ENCODE measurements at regions of chr7 and their contacts with region 1.

Region 1: DNA sequence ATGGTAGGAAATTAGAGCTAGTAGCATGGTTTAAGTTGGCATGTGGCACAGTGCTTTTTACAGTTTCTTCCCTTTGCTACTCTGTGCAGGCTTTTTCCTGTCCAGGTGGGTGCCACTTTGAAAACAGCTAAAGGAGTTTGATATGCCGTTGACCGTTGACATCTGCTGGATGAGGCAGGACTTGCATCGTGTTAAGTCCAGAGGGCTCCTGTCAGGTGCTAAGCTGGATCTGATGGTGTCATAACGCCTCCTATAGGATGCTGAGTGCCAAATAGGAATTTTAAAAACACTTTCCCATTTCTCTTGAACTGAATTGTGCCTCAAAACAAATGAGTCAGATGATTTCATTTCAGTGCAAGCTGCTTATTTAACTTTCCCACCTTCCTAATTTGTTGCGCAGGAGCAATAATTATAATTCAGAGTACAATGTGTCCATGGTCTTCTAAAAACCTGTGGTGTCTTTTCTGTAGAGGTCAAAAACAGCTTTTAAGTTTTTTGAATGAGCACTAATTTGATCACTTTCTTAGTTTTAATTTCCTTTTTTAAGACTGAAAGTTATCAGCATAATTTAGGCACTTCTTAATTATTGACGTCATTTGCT is 178.3 kb downstream of the CDCA7L start:
- H3K4me3 ChIP-seq: no peak overlapping the region
- H3K27ac ChIP-seq: no peak overlapping the region
- H3K4me1 ChIP-seq: no peaks in the 10 kb centered on the region
- CTCF ChIP-seq: peak; percentile 66

Region 2: DNA sequence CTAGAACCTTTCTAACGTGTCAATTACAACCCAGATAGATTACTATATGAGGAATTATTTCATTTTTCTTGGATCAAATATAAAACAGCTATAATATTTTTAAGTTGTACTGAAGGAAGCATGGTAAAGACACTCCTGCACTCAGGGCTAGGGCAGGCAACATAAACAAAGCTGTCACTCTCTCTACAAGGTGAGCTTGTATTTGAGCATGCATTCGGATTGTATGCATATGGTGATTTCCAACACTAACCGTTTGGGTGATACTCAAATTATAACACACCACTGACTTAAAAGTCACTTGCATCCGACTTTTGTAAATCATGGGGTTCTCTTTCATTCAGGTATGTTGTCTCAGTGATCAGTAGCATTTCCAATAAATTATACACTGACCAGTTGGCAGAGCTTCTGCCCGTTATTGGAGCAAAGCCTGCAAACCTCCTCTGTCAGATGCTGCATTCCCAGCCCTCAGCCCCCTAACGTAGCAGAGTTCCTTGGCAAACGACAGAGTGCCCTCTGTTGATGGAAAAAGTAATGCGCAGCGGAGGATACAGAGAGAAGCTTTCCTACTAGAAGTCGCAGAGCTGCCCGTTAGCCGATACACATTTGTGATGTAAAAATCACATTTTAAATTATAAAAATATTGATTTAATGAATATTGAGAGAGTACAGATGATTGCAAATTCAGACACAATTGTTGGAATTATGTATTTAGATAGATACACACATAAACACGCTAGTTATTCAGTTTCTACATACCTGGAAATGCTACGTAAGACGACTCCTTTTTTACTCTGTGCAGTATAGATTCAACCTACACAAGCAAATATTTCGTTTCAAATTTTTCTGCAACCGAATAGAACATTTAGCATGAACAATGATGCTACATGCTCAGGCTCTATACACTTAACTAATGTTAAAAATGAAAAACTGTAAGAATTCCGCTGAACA is 513.4 kb before region 1 on chr7:
- CTCF ChIA-PET with region 1: interaction called, 110 read pairs
- POLR2A ChIA-PET with region 1: no interaction called
- H3K4me3 ChIP-seq: no peak overlapping the region
- H3K27ac ChIP-seq: no peak overlapping the region
- H3K4me1 ChIP-seq: 0 out of 2 replicates have a peak, but pooled peaks cover 2% of the 10 kb centered on the region
- CTCF ChIP-seq: peak; percentile 47; the same call in 1 of the 2 replicates

Region 3: DNA sequence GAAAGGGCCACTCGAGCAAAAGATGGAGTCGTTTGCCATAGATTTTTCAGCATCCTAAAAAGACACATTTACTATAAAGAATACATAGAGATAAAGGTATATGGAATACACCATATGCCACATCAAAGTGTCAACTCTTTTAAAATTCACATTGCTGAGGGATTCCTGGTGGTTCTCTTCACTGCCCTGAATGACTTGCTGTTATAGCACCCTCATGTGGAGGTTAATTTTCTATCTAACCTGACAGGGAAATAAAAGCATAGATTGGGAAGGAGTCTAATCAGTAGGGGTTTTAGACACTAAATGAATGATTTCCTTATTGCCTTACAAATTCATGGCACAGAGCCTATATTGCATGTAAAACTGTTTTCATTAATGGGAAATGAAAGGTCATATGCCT is 198.6 kb before region 1 on chr7:
- CTCF ChIA-PET with region 1: interaction called, 15 read pairs
- POLR2A ChIA-PET with region 1: no interaction called
- H3K4me3 ChIP-seq: no peak overlapping the region
- H3K27ac ChIP-seq: no peak overlapping the region
- H3K4me1 ChIP-seq: no peaks in the 10 kb centered on the region
- CTCF ChIP-seq: no peak

Region 4: GRCh38 chr7:21640105-21640504 is 127.3 kb before region 1 on chr7:
- CTCF ChIA-PET with region 1: no interaction called
- POLR2A ChIA-PET with region 1: no interaction called
- H3K4me3 ChIP-seq: no peak overlapping the region
- H3K27ac ChIP-seq: no peak overlapping the region
- H3K4me1 ChIP-seq: no peaks in the 10 kb centered on the region
- CTCF ChIP-seq: no peak

Region 5: DNA sequence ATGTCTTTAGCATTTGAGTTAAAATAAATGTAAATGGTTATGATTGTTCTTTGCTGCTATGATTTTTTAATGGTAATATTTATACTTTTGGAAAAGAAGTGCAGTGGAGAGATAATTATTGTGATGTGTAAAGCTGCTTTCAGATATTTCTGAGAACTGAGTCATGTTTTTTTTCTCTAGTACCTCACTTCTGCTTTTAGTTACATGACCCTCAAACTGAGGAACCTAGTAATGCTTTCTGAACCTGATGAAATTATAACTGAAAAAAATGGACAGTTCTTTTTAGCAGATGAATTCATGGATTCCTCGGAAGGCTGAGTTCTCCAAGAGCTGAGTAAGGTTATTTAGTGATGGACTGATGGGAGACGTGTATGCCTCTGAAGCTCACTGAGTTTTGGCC is 10.5 kb after region 1 on chr7:
- CTCF ChIA-PET with region 1: interaction called, 47 read pairs
- POLR2A ChIA-PET with region 1: no interaction called
- H3K4me3 ChIP-seq: no peak overlapping the region
- H3K27ac ChIP-seq: no peak overlapping the region
- H3K4me1 ChIP-seq: no peaks in the 10 kb centered on the region
- CTCF ChIP-seq: no peak

Region 6: DNA sequence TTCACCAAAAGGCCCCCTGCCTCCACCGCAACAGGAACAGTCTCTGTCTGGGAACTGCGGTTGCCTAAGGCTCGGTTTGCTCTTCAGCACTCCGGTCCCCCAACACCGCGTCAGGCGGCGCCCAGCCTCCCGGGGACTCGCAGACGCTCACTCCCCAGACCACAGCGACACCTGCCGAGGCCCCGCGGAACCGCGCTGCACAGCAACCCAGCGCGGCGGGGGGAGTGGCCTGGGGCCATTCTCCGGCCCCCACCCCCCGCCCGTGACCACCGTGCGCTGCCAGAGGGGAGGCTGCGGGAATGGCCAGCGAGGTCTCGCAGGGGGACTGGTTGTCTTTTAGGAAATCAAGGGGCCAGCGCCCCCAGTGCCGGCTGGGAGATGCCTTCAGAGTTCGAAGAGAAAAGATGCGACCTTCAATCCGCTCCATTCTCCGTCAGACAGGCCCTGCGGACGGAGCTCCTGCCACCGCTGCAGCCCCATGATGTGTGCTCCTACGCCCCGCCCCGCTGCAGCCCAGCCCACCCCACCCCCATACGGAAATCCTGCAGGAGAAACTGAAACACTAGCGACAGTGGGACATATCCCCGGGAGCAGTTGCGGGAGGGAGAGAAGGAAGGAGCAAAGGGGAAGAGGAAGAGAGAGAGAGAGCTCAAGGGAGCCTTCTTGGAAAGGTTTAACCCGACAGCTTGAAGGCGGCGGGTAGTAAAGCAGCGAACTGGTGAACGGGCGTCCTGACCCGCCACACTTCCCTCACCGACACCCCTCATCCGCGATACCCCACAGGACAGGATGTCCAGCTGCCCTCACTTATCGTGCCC is 315.7 kb after region 1 on chr7:
- CTCF ChIA-PET with region 1: interaction called, 11 read pairs
- POLR2A ChIA-PET with region 1: no interaction called
- H3K4me3 ChIP-seq: peak overlapping the region; percentile 63
- H3K27ac ChIP-seq: peak overlapping the region; percentile 47; the same call in 1 of the 2 replicates
- H3K4me1 ChIP-seq: 0 out of 2 replicates have a peak, but pooled peaks cover 3% of the 10 kb centered on the region
- CTCF ChIP-seq: peak; percentile 99

Region 7: GRCh38 chr7:22251281-22251680 is 483.9 kb after region 1 on chr7:
- CTCF ChIA-PET with region 1: no interaction called
- POLR2A ChIA-PET with region 1: no interaction called
- H3K4me3 ChIP-seq: no peak overlapping the region
- H3K27ac ChIP-seq: no peak overlapping the region
- H3K4me1 ChIP-seq: peaks cover 7% of the 10 kb centered on the region
- CTCF ChIP-seq: no peak